OCI-LY7 (cell line): ENCODE measurements at regions of chr19 and their contacts with region 1.

Region 1: DNA sequence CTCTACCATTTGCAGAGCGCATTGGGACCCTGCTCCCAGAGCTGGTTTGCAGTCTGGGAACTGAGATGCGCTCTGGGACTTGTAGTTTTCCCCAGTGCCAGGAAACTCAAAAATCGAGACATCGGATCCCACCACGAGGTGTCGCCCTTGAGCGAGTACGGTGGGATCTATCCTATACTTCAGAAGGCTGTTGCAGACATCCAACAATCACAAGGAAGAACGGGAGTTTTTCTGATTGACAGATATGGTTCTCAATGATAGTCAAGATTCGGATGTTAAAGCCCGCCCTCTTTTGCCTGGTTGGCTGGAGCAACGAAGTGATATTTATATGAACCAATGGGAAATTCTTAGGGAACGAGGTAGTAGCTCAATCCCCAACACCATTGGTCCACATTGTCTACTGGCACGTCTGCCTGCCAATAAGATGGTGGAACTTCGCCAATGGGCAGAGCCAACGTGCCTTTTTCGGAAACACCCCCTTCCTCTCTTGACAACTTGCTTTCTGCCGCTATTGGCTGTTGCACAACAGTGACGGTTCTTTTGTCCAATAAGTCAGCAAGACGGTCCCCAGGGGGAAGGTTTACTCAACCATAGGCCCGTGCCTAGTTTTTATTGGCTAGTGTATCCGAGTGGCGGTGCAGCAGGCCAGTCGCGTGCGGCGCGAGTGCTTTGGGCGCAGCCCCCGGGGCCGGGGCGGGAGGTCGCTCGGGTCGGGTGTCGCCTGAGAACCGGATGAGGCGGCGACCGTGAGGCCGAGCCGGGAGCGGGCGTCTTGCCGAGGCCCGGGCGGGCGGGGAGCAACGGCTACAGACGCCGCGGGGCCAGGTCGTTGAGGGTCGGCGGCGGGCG is at the start of gene DNM2:
- DNase-seq: peak; percentile 100
- H3K4me3 ChIP-seq: peak within 1 kb of the TSS; percentile 94
- H3K27ac ChIP-seq: peak within 1 kb of the TSS; percentile 66
- H3K4me1 ChIP-seq: peaks cover 13% of the 10 kb centered on the region
- CTCF ChIP-seq: peak; percentile 93
- total RNA-seq, gene DNM2: 108 and 139 TPM in 2 replicates

Region 2: GRCh38 chr19:10690341-10690781 is 27.2 kb before region 1 on chr19:
- CTCF ChIA-PET with region 1: no interaction called
- POLR2A ChIA-PET with region 1: no interaction called
- intact Hi-C with region 1: no loop called
- DNase-seq: no peak
- H3K4me3 ChIP-seq: no peak overlapping the region
- H3K27ac ChIP-seq: no peak overlapping the region
- H3K4me1 ChIP-seq: no peaks in the 10 kb centered on the region
- CTCF ChIP-seq: no peak

Region 3: DNA sequence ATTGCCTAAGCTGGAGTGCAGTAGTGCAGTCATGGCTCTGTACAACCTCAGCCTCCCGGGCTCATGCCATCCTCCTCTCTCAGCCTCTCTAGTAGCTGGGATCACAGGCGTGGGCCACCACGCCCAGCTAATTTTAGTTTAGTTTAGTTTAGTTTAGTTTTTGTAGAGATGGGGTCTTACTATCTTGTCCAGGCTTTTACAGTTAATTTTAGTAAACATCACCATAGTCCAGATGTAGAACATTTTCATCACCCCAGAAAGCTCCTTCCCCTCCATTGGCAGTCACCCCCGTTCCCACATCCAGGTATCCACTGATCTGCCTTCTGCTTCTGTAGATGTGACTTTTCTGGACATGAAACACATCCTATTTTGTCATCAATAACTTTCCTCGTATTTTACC is 41.4 kb after region 1 on chr19:
- CTCF ChIA-PET with region 1: no interaction called
- POLR2A ChIA-PET with region 1: interaction called, 3 read pairs
- intact Hi-C with region 1: loop called (anchors 1 kb)
- DNase-seq: no peak
- H3K4me3 ChIP-seq: peak overlapping the region; percentile 66
- H3K27ac ChIP-seq: peak overlapping the region; percentile 94
- H3K4me1 ChIP-seq: peaks cover 42% of the 10 kb centered on the region
- CTCF ChIP-seq: no peak

Region 4: GRCh38 chr19:10820173-10820572 is 102.6 kb after region 1 on chr19:
- CTCF ChIA-PET with region 1: no interaction called
- POLR2A ChIA-PET with region 1: interaction called, 5 read pairs
- intact Hi-C with region 1: loop called (anchors 1 kb)
- DNase-seq: peak; percentile 34
- H3K4me3 ChIP-seq: no peak overlapping the region
- H3K27ac ChIP-seq: no peak overlapping the region
- H3K4me1 ChIP-seq: no peaks in the 10 kb centered on the region
- CTCF ChIP-seq: peak; percentile 69

Region 5: GRCh38 chr19:10835754-10836477 is 118.3 kb after region 1 on chr19 and contains the start of gene TMED1:
- CTCF ChIA-PET with region 1: interaction called, 3 read pairs
- POLR2A ChIA-PET with region 1: interaction called, 11 read pairs
- intact Hi-C with region 1: no loop called
- DNase-seq: peak; percentile 100
- H3K4me3 ChIP-seq: peak within 1 kb of the TSS; percentile 74
- H3K27ac ChIP-seq: peak within 1 kb of the TSS; percentile 84
- H3K4me1 ChIP-seq: peaks cover 26% of the 10 kb centered on the region
- CTCF ChIP-seq: peak; percentile 39; the same call in 1 of the 2 replicates
- total RNA-seq, gene TMED1: 20.8 and 22.5 TPM in 2 replicates

Region 6: GRCh38 chr19:10864538-10864899 is 146.9 kb after region 1 on chr19:
- CTCF ChIA-PET with region 1: interaction called, 7 read pairs
- POLR2A ChIA-PET with region 1: no interaction called
- intact Hi-C with region 1: loop called (anchors 1 kb)
- DNase-seq: peak; percentile 85
- H3K4me3 ChIP-seq: no peak overlapping the region
- H3K27ac ChIP-seq: no peak overlapping the region
- H3K4me1 ChIP-seq: peaks cover 38% of the 10 kb centered on the region
- CTCF ChIP-seq: peak; percentile 98